GM12878 (cell line): ENCODE measurements at regions of chr9 and their contacts with region 1.

Region 1: GRCh38 chr9:9448796-9449195 is 1164.0 kb downstream of the PTPRD start:
- DNase-seq: no peak
- ATAC-seq: no peak
- H3K4me3 ChIP-seq: no peak overlapping the region
- H3K27ac ChIP-seq: no peak overlapping the region
- H3K4me1 ChIP-seq: no peaks in the 10 kb centered on the region
- H3K27me3 ChIP-seq: no peaks in the 10 kb centered on the region
- CTCF ChIP-seq: no peak
- EP300 ChIP-seq: no peak
- POLR2A ChIP-seq: no peak
- RAD21 ChIP-seq: no peak

Region 2: GRCh38 chr9:9469271-9469670 is 20.5 kb after region 1 on chr9:
- CTCF ChIA-PET with region 1: no interaction called
- POLR2A ChIA-PET with region 1: no interaction called
- RAD21 ChIA-PET with region 1: no interaction called
- SMC1A ChIA-PET with region 1: no interaction called
- in situ Hi-C with region 1: no loop called
- intact Hi-C with region 1: no loop called
- DNase-seq: no peak
- ATAC-seq: no peak
- H3K4me3 ChIP-seq: no peak overlapping the region
- H3K27ac ChIP-seq: no peak overlapping the region
- H3K4me1 ChIP-seq: no peaks in the 10 kb centered on the region
- H3K27me3 ChIP-seq: no peaks in the 10 kb centered on the region
- CTCF ChIP-seq: no peak
- EP300 ChIP-seq: no peak
- POLR2A ChIP-seq: no peak
- RAD21 ChIP-seq: no peak

Region 3: GRCh38 chr9:9499546-9499945 is 50.8 kb after region 1 on chr9:
- CTCF ChIA-PET with region 1: no interaction called
- POLR2A ChIA-PET with region 1: no interaction called
- RAD21 ChIA-PET with region 1: no interaction called
- SMC1A ChIA-PET with region 1: no interaction called
- in situ Hi-C with region 1: no loop called
- intact Hi-C with region 1: loop called (anchors 5 kb)
- DNase-seq: no peak
- ATAC-seq: no peak
- H3K4me3 ChIP-seq: no peak overlapping the region
- H3K27ac ChIP-seq: no peak overlapping the region
- H3K4me1 ChIP-seq: no peaks in the 10 kb centered on the region
- H3K27me3 ChIP-seq: no peaks in the 10 kb centered on the region
- CTCF ChIP-seq: no peak
- EP300 ChIP-seq: no peak
- POLR2A ChIP-seq: no peak
- RAD21 ChIP-seq: no peak